Posterior cingulate gyrus (tissue), 11 donors: ENCODE measurements at regions of chr3 and their contacts with region 1.

Region 1: DNA sequence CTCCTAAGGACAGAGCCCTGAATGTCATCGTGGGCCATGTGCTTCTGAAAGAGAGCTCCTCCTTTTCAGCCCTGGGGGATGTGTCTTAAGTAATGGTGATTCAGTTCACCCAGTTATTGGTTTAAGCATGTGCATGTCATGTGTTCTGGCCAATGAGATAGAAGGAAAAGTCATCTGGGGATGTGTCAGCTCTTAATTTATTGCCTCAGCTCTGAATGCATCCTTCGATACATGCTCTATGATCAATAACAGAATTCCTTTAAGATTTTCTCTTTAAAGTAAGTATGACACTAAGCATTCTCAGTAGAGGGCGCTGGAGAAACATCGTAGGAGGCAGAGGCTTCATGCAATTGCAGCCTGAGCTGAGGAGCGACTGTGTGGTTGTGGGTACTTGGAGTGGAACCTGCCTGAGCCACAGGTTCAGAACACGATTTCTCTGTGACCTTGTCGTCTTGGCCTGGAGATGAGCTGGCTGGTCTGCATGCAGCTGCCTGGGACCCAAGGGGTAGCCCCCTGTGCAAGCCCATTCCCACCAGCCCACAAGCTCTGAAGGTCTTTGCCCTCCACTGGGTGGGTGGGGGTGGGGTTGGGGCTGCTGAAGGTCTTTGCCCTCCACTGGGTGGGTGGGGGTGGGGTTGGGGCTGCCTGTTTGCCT is 69.5 kb downstream of the C3orf38 start:
- DNase-seq: peak in 7 of 10 donors; percentile 37 to 88 (median 57)

Region 2: DNA sequence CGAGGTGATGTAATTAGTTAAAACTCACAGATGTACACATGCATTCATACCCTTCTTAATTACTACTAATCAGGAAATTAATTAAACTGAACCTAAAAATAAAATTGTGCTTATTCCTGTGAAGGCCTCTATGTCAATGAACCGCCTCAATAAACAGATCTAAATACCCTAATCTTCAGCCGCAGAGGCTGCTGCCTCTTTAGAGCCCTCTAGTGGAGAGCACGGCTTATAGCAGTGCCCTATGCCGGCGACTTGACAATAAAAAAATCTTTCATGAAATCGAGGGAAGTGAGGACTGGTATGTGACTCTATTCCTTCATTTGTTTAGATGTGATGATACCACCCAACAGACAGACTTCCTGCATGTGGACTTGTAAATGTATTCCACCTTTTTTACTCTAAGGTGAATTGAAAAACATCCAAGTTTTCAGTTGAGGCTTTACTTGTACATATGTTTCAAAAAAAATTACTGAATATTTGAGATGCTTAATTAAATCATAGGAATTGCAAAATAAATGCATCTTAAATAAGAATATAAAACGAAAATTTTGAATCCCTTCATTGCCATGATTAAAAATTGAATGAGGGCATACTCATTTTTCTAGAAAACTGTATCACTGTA is 879.8 kb after region 1 on chr3:
- intact Hi-C with region 1: loop called (anchors 5 kb)
- DNase-seq: peak in 8 of 10 donors; percentile 11 to 88 (median 40)

Region 3: DNA sequence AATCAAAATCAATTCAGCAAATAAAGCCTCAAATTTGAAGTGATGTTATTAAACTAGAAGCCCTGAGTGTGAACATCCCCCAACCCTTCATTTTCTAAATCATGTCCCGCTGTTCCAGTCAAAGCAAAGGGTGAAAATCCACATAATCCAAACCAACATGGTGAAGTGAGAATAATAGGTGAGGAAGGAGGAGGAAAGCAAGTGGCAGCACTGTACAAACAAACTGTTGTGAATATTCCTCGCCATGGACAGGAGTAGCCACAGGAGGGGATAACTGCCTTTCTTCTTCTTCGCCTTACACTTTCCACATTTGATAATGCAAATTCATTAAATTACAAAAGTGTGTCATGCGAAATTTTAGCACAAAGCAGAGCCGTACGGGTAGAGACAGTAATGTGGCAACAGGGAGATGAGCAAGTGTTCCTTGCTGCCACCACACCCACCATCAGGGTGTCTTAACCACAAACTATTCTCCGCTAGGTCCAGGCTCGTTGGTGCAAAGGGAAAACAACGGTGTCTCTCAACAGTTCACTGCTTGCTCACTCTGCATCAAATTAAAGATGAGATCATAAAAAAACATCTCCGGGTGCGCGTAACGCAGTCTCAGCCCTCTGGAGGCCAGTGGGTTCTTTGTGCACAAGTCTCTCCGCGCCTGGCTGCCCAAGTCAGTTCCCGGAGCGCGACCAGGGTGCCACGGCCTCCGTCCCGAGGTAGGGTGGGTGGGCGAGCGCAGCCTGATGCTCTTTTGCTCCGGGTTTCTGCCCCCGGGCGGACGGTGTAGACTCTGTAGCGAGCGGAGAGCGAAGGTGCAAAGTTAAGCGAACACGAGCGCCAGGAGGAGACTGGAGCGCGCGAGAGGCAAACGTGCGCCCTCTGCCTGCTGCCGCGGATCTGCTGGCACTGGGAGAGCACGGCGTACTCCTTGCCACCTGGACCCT is 894.9 kb after region 1 on chr3:
- intact Hi-C with region 1: loop called (anchors 5 kb)
- DNase-seq: peak; percentile 58 to 96 (median 80)

Region 4: DNA sequence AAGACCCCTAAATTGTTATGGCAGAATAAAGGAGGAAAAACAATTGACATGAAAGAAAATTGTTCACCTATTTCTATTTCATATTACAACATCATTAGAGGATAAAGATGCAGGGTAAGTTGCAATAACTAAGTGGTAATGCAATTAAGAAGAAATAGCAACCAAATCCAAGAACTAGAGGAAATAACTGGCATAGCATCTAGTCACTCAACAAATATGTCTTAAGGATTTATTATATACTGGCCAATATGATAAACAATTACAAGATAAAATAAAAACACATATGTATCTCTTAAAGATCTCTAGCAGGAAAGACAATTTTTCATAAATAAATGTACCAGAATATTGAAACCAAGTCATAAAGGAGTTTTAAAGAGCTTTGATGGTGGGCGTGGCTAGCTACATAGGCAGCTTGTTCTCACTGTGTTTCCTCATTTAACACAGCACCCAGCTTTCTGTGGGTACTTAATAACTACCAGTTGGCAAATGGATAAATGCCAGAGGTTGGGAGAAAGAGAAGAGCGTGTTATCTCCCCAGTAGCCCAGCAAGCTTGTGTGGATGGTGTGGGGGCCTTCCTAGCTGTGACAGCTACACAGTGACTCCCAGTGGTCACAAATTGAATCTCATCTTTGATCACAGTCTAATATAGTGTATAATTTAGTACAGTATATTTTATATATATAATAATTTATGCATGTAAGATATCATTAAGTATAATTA is 1872.1 kb after region 1 on chr3:
- intact Hi-C with region 1: loop called (anchors 5 kb)
- DNase-seq: peak in 6 of 10 donors; percentile 11 to 89 (median 27)